ENCODE measurements at regions of chr2 and their contacts with region 1.

Region 1: DNA sequence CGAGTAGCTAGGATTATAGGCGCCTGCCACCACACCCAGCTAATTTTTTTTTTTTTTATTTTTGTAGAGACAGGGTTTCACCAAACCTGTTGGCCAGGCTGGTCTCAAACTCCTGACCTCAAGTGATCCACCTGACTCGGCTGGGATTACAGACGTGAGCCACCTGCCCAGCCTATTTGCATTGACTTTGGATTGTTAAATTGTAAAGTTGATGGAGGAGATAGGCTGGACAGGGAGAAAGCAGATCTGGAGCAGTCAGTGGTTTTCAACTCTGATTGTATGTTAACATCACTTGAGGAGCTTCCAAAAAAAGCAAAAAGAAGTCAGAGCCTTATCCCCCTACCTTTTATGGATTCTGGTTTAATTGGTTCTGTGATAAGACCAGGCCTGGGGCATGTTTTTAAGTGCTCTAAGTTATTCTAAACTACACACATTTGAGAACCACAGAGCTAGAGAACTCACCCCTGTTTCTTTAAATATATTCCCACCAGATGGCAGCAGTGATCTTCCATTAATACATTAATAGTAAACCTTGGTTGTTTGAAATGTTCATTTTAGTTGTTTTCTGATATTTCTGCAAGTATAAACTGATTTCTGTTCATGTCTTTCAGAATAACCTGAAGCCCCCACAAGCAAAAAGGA is 7.5 kb downstream of the C2orf49 start:
- DNase-seq: no peak
- ATAC-seq: no peak

Region 2: GRCh38 chr2:105521205-105521604 is 176.4 kb after region 1 on chr2:
- intact Hi-C with region 1: loop called (anchors 2 kb)
- DNase-seq: no peak
- ATAC-seq: no peak

Region 3: DNA sequence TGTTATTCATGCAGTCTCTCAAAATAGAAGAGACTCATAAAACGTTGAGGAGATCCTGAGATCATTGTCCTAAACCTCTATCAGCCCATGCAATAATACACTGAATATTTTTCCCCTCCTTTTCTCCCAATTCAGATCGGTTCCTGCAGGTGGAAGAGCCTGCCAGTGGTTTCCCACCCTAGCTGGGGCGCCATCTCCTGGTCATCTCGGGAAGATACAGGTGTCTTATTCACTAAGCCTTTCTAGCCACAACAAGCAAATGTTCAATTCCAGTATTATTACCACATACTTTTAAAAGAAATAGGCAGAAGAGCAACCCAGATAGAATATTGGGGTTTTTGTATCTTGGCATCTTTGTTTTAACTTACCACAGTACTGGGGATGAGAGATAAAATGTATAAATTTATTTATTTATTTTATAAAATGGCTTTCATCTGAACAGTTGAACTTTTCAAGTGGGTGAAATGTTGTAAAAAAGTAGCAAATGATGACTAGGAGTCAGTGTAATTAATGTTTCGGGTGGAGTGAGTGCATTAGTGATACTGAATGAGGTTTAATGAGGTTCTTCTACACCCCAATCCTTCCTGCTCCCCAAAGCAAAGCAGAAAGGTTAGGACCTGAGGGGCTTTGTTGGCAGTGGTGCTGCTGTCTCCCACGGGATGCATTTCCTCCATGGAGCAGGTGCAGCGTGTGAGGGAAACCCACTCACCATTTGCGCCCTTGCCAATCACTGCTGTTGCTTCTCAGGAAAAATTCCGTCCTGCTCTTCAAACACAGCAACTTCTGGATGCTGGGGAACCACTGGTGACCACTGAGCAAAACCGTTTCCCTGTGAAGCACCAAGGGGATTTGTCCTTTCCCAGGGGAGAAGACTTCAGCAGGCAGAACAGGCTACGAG is 201.2 kb after region 1 on chr2:
- intact Hi-C with region 1: loop called (anchors 2 kb)
- DNase-seq: no peak
- ATAC-seq: peak; percentile 44

Measured in Right ventricle myocardium inferior (tissue), 1 donor.